ENCODE measurements at regions of chr16 and their contacts with region 1.

Region 1: DNA sequence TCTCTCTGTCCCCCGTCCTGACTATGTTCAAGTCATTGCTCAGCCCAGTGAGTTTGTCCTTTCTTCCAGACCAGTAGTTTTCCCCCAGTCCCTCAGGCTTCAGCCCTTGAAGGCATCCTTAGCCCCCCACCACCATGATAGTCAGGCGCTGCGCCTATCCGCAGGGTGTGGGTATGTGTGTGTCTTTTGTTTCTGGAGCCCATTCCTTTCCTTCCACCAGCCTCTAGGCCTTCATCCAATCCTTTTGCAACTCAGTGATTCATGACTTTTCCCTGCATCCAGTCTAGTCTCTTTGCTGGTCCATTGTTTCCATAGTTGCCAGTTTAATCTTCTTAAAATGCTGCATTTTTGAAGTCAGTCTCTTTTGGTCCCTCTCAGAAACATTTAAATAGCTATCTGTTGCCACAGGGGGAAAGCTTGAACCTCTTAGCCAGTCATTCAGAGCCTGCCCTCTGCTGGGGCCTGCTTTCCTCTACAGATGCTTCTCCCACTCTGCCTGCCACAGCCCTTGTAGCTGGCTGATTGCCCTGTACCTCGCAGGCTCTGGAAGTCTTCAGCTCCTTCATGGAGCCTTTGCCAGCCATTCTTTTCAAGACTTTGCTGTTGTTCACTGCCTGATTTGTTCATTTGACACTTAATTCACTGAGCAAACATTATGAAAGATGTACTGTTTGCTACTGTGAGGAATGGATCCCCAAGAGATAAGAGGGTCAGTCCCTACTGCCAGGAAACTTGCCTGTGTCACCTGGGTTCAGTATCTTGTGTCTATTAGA is 55.9 kb upstream of the ADCY7 start:
- DNase-seq: peak; percentile 75
- H3K4me3 ChIP-seq: no peak overlapping the region
- CTCF ChIP-seq: peak; percentile 91

Region 2: GRCh38 chr16:50065624-50066481 is 144.6 kb before region 1 on chr16 and contains the start of gene HEATR3:
- CTCF ChIA-PET with region 1: interaction called, 180 read pairs
- POLR2A ChIA-PET with region 1: interaction called, 3 read pairs
- DNase-seq: peak; percentile 53
- H3K4me3 ChIP-seq: peak within 1 kb of the TSS; percentile 100
- CTCF ChIP-seq: no peak

Region 3: GRCh38 chr16:50152807-50153452 is 57.5 kb before region 1 on chr16 and contains the start of gene TENT4B:
- CTCF ChIA-PET with region 1: interaction called, 19 read pairs
- POLR2A ChIA-PET with region 1: interaction called, 4 read pairs
- DNase-seq: no peak
- H3K4me3 ChIP-seq: peak within 1 kb of the TSS; percentile 83
- CTCF ChIP-seq: no peak

Region 4: DNA sequence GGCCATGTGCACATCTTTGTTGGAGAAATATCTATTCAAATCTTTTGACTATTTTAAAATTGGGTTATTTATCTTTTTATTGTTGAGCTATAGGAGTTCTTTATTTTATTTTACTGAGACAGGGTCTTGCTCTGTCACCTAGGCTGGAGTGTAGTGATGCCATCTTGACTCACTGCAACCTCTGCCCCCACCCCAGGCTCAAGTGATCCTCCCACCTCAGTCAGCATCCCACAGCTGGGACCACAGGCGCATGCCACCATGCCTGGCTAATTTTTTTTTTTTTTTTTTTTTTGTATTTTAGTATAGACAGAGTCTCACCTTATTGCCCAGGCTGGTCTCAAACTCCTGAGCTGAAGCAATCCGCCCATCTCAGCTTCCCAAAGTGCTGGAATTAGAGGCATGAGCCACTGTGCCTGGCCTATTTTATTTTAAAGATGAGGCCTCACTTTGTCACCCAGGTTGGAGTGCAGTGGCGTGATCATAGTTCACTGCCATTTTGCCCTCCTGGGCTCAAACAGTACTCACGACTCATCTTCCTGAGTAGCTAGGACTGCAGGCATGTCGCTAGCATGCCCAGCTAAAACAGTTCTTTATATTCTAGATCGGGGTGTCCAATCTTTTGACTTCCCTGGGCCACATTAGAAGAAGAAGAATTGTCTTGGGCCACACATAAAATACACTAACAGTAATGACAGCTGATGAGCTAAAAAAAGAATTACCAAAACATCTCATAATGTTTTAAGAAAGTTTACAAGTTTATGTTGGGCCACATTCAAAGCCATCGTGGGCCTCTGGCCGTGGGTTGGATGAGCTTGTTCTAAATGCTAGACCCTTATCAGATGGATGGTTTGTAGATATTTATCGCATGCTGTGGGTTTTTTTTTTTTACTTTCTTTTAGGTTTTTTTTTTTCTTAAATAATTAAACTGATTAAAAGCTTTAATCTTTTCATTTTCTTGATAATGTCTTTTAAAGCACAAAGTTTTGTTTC is 43.6 kb before region 1 on chr16:
- CTCF ChIA-PET with region 1: interaction called, 16 read pairs
- POLR2A ChIA-PET with region 1: no interaction called
- DNase-seq: no peak
- H3K4me3 ChIP-seq: no peak overlapping the region
- CTCF ChIP-seq: no peak

Region 5: DNA sequence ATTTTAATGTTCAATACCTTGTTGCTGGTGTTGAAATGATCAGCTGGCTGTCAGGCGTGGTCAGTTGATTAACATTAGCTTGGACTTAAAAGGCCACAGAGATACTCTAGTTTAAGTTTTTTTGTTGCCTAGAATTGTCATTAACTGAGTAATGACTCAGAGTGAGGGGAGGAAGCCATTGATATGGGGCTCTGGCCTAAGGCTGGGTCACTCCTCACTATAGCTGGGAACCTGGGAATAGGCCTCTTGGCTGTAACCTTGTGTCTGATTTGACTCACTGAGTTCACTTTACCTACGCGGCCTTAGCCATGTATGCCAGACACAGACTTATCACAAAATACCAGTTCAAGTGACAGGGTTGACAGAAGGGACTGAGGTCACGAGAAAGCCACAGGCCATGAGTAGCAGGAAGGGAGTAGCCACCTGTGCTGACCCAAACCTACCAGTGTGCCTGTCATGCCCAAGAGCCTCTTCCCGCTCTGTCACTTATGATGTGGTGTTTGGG is 18.0 kb after region 1 on chr16:
- CTCF ChIA-PET with region 1: interaction called, 17 read pairs
- POLR2A ChIA-PET with region 1: no interaction called
- DNase-seq: no peak
- H3K4me3 ChIP-seq: no peak overlapping the region
- CTCF ChIP-seq: no peak

Region 6: GRCh38 chr16:50354629-50355456 is 144.4 kb after region 1 on chr16:
- CTCF ChIA-PET with region 1: interaction called, 111 read pairs
- POLR2A ChIA-PET with region 1: interaction called, 3 read pairs
- DNase-seq: no peak
- H3K4me3 ChIP-seq: no peak overlapping the region
- CTCF ChIP-seq: peak; percentile 23

Region 7: DNA sequence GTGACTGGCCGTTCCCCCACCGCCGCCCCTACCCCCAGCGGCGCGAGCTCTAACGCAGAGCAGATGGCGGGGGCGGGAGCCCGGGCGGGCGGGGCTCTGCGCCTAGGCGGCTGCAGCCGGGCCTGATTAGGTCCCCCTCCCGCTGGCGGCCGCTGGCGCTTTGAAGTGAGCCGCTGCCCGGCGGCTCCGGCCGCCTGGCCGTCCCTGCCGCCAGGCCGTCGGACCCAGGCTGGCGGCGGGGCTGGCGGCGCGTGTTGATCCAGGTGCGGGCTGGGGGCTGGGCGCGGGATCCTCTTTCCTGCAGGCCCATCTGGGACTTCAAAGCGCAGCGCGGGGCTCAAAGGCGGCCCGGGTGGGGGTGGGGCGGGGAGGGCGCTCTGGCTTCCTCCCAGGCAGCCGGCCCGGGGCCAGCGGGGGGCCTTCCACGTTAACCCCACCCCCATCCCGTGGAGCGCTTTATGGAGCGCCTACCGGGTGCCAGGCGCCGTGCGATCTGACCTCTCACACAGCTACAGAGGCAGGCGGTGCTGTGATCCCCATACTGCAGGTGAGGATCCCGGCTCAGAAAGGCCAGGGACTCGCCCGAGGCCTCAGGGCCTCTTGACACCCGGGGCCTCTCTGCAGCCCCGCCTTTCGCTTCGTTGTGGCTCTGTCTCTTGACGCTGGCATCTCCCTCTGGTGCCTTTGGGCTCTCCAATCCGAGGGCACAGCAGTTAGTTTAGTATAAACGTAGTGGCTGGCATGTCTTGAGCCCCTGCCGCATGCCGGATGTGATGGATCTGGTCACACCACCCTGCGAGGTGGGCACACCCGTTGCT is 257.7 kb after region 1 on chr16:
- CTCF ChIA-PET with region 1: no interaction called
- POLR2A ChIA-PET with region 1: no interaction called
- DNase-seq: no peak
- H3K4me3 ChIP-seq: no peak overlapping the region; the same call in 1 of the 2 replicates
- CTCF ChIP-seq: no peak

Measured in AG04449 (cell line).